Spleen (tissue), 13 donors: ENCODE measurements at regions of chrX and their contacts with region 1.

Region 1: DNA sequence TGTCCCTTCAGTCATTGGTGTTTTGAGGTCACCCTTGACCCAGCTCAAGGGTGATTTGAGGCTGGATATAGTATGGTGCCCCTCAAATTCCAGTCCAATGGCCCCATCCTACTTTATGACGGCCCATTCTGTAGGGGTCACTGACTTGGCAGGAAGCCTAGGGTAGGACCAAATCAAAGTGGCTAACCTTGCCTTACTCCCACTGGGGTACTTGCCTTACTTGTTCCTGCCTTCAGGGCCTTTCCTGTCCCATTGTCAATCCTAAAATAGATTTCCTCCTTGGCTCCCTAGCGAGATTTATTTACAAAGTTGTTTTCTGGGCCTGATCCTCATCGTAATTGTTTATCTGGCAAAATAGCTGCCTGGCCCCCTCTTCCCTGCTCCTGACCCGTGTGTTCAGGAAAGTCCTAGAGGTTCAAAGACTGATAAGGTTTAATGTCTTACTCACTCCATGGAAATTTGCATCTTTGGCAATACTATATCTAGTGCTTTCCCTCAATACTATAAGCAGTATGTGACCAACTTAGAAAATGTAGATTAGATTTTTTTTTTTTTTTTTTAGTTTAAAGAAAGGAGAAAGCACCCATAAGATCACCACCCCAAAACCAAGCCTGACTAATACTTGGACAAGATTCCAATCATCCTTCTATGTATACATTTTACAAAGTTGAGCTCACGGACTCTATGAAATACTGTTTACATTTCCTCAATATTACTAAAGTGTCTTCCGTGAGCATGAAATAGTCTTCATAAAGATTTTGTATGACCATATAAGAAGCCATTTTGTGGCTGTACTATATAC is 44.8 kb downstream of the MSN start:
- DNase-seq: no peak
- H3K4me3 ChIP-seq: no peak overlapping the region
- H3K27ac ChIP-seq: peak overlapping the region in 3 of 8 donors; percentile 1 to 18 (median 13)
- H3K4me1 ChIP-seq: peaks cover under 1 to 86% (median 35%) of the 10 kb centered on the region in 6 donors
- H3K27me3 ChIP-seq: no peaks in the 10 kb centered on the region
- CTCF ChIP-seq: no peak
- POLR2A ChIP-seq: no peak

Region 2: GRCh38 chrX:65595460-65595876 is 116.7 kb before region 1 on chrX:
- intact Hi-C with region 1: loop called (anchors 10 kb)
- DNase-seq: peak; percentile 95
- H3K4me3 ChIP-seq: peak overlapping the region in 1 of 8 donors; percentile 30
- H3K27ac ChIP-seq: peak overlapping the region; percentile 31 to 89 (median 86)
- H3K4me1 ChIP-seq: peaks cover 11 to 55% (median 35%) of the 10 kb centered on the region in 6 donors
- H3K27me3 ChIP-seq: peaks cover 0 to 8% (median 0%) of the 10 kb centered on the region in 7 donors
- CTCF ChIP-seq: peak; percentile 97 to 100 (median 99)
- POLR2A ChIP-seq: no peak

Region 3: GRCh38 chrX:65997978-65998717 is 285.9 kb after region 1 on chrX:
- intact Hi-C with region 1: no loop called
- DNase-seq: no peak
- H3K4me3 ChIP-seq: no peak overlapping the region
- H3K27ac ChIP-seq: peak overlapping the region in 6 of 8 donors; percentile 54 to 87 (median 69)
- H3K4me1 ChIP-seq: peaks cover 0 to 42% (median 22%) of the 10 kb centered on the region in 6 donors
- H3K27me3 ChIP-seq: no peaks in the 10 kb centered on the region
- CTCF ChIP-seq: no peak
- POLR2A ChIP-seq: no peak